Activated CD4-positive, alpha-beta T cell treated with anti-CD3 and anti-CD28 coated beads, Interleukin-2, amount 10 ng/mL, durations not matched to agents 7 days and 5 days (primary cell): ENCODE measurements at regions of chr10 and their contacts with region 1.

Region 1: DNA sequence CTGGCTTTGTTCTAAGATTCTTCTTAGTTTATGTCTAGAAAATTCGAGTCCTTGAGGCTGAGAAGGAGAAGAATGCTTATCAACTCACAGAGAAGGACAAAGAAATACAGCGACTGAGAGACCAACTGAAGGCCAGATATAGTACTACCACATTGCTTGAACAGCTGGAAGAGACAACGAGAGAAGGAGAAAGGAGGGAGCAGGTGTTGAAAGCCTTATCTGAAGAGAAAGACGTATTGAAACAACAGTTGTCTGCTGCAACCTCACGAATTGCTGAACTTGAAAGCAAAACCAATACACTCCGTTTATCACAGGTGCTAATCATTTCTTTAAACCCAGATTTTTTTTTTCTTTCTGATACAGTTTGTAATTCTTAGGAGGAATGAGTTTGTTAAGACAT is 6.7 kb downstream of the CEP55 start:
- DNase-seq: no peak
- H3K4me3 Mint-ChIP-seq: peak overlapping the region; percentile 65
- H3K27ac Mint-ChIP-seq: peak overlapping the region; percentile 89
- H3K4me1 Mint-ChIP-seq: peaks cover 51% of the 10 kb centered on the region
- H3K27me3 Mint-ChIP-seq: no peaks in the 10 kb centered on the region

Region 2: GRCh38 chr10:93039721-93040120 is 463.4 kb before region 1 on chr10:
- CTCF ChIA-PET with region 1: no interaction called
- POLR2A ChIA-PET with region 1: interaction called, 10 read pairs
- DNase-seq: peak; percentile 11
- H3K4me3 Mint-ChIP-seq: no peak overlapping the region
- H3K27ac Mint-ChIP-seq: no peak overlapping the region
- H3K4me1 Mint-ChIP-seq: no peaks in the 10 kb centered on the region
- H3K27me3 Mint-ChIP-seq: no peaks in the 10 kb centered on the region

Region 3: DNA sequence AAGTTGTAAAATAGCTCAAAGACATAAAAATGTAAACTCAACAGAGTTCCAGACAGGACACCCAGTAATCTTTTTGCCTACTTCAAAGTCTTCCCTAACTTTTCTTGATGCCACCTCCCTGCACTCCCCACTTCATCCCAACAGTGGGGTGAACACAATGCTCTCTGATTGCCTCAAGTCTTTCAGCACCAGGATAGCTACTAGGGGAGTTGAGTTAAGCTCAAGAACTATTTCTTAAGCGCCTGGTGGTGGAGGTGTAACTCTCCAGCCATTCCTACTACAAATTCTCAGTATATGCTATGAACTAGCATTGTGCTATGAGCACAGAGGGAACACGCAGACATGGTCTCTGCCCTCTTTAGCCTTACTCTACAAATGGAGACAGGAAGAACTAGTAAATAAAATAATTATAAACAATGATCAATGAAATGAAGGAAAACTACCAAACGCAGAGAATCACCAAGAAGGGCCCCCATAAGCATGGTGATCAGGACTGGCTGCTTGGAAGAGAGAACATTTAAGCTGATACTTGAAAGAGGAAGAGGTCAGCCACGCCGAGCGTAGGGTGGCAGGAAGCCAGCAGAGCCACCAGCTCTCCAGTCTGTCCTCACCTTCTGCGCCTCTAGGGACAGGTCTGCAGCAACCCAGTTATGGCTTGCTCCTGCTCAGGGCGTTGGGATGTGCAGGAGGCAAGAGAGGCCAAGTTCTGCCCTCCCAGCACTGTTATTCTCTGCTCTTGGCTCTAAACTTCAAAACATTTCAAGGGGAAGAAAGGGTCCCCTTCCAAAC is 216.1 kb after region 1 on chr10:
- CTCF ChIA-PET with region 1: no interaction called
- POLR2A ChIA-PET with region 1: no interaction called
- DNase-seq: no peak
- H3K4me3 Mint-ChIP-seq: no peak overlapping the region
- H3K27ac Mint-ChIP-seq: no peak overlapping the region
- H3K4me1 Mint-ChIP-seq: peaks cover 4% of the 10 kb centered on the region
- H3K27me3 Mint-ChIP-seq: peaks cover 31% of the 10 kb centered on the region